ENCODE measurements at regions of chr6 and their contacts with region 1.

Region 1: DNA sequence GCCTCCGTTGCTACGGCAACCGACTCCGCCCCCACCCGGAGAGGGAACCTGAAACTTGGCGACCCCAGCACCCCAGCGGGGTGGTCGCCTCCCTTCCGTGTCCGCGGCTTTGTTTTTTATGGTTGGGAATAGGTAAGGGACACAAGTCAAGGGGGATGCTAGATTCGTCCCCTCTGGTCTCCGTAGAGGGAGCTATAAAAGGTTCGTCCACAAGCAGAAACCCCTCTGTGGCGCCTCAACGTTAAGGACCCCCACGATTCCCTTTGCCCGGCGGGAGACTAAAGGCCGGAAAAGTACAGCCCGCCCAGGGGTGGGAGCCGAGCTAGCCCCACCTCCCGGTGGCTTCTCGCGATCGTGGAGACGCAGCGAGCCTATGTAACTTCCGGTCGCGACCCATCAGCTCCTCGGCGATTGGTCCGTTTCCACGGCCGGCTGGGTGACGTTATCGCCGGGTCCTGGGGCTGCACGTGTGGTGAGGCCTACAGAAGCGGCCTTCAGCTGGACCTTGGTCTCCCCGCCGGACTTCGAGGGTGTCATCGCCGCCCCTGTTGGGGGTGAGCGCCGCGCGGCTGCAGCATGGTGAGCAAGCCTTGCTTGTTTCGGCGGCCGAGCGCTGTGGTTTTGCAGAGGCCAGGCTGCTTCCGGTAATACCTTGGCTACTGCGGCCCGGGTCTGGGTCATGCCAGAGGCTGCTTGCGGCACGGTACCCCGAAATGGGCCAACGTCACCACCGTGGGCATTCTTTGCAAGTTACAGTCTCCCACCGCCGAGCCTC is at the start of gene LTV1:
- DNase-seq: peak; percentile 84
- ATAC-seq: peak; percentile 97
- H3K4me3 Mint-ChIP-seq: peak within 1 kb of the TSS; percentile 92
- H3K27ac Mint-ChIP-seq: peak within 1 kb of the TSS; percentile 96
- H3K4me1 Mint-ChIP-seq: peaks cover 17% of the 10 kb centered on the region
- H3K27me3 Mint-ChIP-seq: no peaks in the 10 kb centered on the region
- CTCF ChIP-seq: no peak
- total RNA-seq, gene LTV1: 37.0 and 40.3 TPM in 2 replicates

Region 2: DNA sequence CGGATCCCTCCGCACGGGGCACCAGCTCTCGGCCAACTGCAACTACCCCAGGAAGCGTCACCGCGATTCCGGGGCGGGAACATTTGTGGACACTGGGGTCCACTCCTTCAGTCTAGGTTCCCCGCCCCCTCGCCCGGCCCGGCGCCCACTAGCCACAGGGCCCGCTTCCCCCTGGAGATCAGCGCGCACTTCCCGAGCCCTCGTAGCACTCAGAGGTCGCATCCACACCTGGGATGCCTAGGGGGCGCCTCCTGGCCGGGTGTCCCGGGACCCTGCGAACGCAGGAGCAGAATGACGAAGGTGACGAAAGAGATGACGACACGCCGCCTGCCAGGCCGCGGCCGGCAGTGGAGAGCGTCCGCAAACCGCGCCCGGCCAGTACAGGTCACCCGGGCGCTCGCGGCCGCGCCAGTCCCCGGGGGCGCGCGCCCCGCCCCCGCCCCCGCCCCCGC is 782.7 kb before region 1 on chr6:
- CTCF ChIA-PET with region 1: no interaction called
- POLR2A ChIA-PET with region 1: no interaction called
- intact Hi-C with region 1: loop called (anchors 1 kb)
- DNase-seq: peak; percentile 74
- ATAC-seq: peak; percentile 63
- H3K4me3 Mint-ChIP-seq: peak overlapping the region; percentile 93
- H3K27ac Mint-ChIP-seq: peak overlapping the region; percentile 86
- H3K4me1 Mint-ChIP-seq: peaks cover 20% of the 10 kb centered on the region
- H3K27me3 Mint-ChIP-seq: no peaks in the 10 kb centered on the region
- CTCF ChIP-seq: no peak

Region 3: GRCh38 chr6:143510991-143511891 is 331.8 kb before region 1 on chr6 and contains the start of gene FUCA2:
- CTCF ChIA-PET with region 1: no interaction called
- POLR2A ChIA-PET with region 1: interaction called, 3 read pairs
- intact Hi-C with region 1: loop called (anchors 5 kb)
- DNase-seq: peak; percentile 47
- ATAC-seq: peak; percentile 69
- H3K4me3 Mint-ChIP-seq: peak within 1 kb of the TSS; percentile 90
- H3K27ac Mint-ChIP-seq: peak within 1 kb of the TSS; percentile 74
- H3K4me1 Mint-ChIP-seq: peaks cover 28% of the 10 kb centered on the region
- H3K27me3 Mint-ChIP-seq: no peaks in the 10 kb centered on the region
- CTCF ChIP-seq: no peak
- total RNA-seq, gene FUCA2: 8.7 and 9.9 TPM in 2 replicates

Region 4: GRCh38 chr6:143940011-143940597 is 97.0 kb after region 1 on chr6:
- CTCF ChIA-PET with region 1: interaction called, 4 read pairs
- POLR2A ChIA-PET with region 1: no interaction called
- intact Hi-C with region 1: loop called (anchors 5 kb)
- DNase-seq: no peak
- ATAC-seq: peak; percentile 98
- H3K4me3 Mint-ChIP-seq: no peak overlapping the region
- H3K27ac Mint-ChIP-seq: no peak overlapping the region
- H3K4me1 Mint-ChIP-seq: no peaks in the 10 kb centered on the region
- H3K27me3 Mint-ChIP-seq: no peaks in the 10 kb centered on the region
- CTCF ChIP-seq: no peak

Region 5: DNA sequence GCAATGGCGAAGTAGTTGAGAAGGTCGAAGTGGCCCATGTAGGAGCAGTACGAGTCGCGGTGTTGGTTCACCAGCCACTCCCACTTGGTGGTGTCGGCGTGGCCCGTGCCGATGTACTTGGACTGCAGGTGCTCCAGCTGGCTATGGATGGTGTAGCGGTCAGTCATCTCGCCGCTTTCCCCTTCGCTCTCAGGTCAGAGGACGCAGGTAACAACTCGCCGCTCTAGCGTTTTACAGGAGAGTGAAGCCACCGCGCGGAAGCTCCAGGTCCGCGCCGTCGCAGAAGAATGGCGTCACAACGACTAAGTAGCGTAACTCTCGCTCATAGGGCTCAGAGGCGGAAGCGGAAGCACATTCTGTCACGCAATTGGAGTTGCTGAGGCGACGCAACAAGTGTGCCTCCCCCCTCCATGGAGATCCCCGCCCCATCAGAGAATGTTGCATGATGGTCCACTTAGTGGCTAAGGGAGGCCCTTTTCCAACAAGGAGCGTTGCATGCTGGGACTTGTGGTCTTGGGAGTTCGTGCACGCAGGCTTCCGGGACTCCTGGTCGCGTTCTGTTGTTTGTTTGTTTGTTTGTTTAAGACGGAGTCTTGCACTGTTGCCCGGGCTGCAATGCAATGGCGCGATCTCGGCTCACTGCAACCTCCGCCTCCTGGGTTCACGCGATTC is 252.4 kb after region 1 on chr6 and contains the start of gene SF3B5:
- CTCF ChIA-PET with region 1: interaction called, 3 read pairs
- POLR2A ChIA-PET with region 1: interaction called, 9 read pairs
- intact Hi-C with region 1: loop called (anchors 1 kb)
- DNase-seq: peak; percentile 93
- ATAC-seq: peak; percentile 96
- H3K4me3 Mint-ChIP-seq: peak within 1 kb of the TSS; percentile 99
- H3K27ac Mint-ChIP-seq: peak within 1 kb of the TSS; percentile 99
- H3K4me1 Mint-ChIP-seq: peaks cover 24% of the 10 kb centered on the region
- H3K27me3 Mint-ChIP-seq: no peaks in the 10 kb centered on the region
- CTCF ChIP-seq: no peak
- total RNA-seq, gene SF3B5: 144 and 147 TPM in 2 replicates

Region 6: GRCh38 chr6:144181639-144182038 is 338.6 kb after region 1 on chr6:
- CTCF ChIA-PET with region 1: no interaction called
- POLR2A ChIA-PET with region 1: no interaction called
- intact Hi-C with region 1: no loop called
- DNase-seq: no peak
- ATAC-seq: no peak
- H3K4me3 Mint-ChIP-seq: no peak overlapping the region
- H3K27ac Mint-ChIP-seq: no peak overlapping the region
- H3K4me1 Mint-ChIP-seq: peaks cover 30% of the 10 kb centered on the region
- H3K27me3 Mint-ChIP-seq: no peaks in the 10 kb centered on the region
- CTCF ChIP-seq: no peak

Region 7: GRCh38 chr6:145734486-145735355 is 1891.6 kb after region 1 on chr6:
- CTCF ChIA-PET with region 1: no interaction called
- POLR2A ChIA-PET with region 1: interaction called, 8 read pairs
- intact Hi-C with region 1: loop called (anchors 10 kb)
- DNase-seq: peak; percentile 77
- ATAC-seq: peak; percentile 72
- H3K4me3 Mint-ChIP-seq: peak overlapping the region; percentile 94
- H3K27ac Mint-ChIP-seq: peak overlapping the region; percentile 94
- H3K4me1 Mint-ChIP-seq: peaks cover 34% of the 10 kb centered on the region
- H3K27me3 Mint-ChIP-seq: no peaks in the 10 kb centered on the region
- CTCF ChIP-seq: no peak

Measured in activated B cell treated with CpG ODN at 0.5 μM for 24 hours (primary cell).